ENCODE measurements at regions of chr21 and their contacts with region 1.

Region 1: GRCh38 chr21:27112186-27112585 is 145.3 kb upstream of the ADAMTS5 start:
- DNase-seq: no peak
- ATAC-seq: no peak
- H3K4me3 ChIP-seq: no peak overlapping the region
- H3K27ac ChIP-seq: no peak overlapping the region
- H3K4me1 ChIP-seq: no peaks in the 10 kb centered on the region
- H3K27me3 ChIP-seq: no peaks in the 10 kb centered on the region

Region 2: DNA sequence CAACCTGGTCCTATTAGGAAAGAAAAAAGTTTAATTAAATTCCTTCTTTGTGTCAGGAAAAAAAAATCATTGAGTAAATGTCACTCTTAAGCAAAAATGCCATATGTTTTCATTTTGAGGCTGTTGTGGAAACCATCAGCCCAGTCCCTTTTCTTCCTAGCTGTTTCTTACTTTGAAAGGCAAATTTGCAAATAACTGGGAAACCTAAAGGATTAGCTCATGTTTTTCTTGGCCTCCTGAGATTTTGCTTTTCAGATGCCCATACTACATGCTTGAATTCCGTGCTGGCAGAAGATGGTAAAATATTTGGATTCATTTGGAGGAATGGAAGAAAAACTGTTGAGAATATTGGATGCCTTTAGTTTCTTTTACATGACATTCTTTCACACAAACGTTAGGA is 36.8 kb after region 1 on chr21:
- intact Hi-C with region 1: no loop called
- DNase-seq: no peak
- ATAC-seq: peak in 1 of 2 donors; percentile 47
- H3K4me3 ChIP-seq: no peak overlapping the region
- H3K27ac ChIP-seq: no peak overlapping the region
- H3K4me1 ChIP-seq: no peaks in the 10 kb centered on the region
- H3K27me3 ChIP-seq: no peaks in the 10 kb centered on the region

Region 3: DNA sequence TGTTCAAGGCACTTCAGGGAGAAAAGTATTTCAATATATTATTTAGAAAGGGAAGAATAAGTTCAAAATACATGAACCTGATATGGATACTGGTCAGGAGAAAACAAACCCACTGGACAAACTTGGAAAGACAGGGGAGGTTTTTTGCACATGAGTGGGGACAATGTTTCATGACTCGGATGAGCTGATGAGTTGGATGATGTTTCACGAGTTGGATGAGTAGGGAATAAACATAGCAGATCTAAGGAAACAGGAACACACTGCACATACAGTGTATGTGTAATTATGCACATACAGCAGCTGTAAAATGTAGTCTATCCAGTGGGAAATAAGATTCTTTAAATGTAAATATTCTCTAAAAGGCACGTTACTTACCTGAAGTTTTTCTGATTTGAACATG is 537.6 kb after region 1 on chr21:
- intact Hi-C with region 1: loop called in 1 of 4 experiments (anchors 5 kb)
- DNase-seq: no peak
- ATAC-seq: no peak
- H3K4me3 ChIP-seq: no peak overlapping the region
- H3K27ac ChIP-seq: no peak overlapping the region
- H3K4me1 ChIP-seq: no peaks in the 10 kb centered on the region
- H3K27me3 ChIP-seq: no peaks in the 10 kb centered on the region

Measured in right cardiac atrium (tissue), 5 donors.